ENCODE measurements at regions of chr19 and their contacts with region 1.

Region 1: DNA sequence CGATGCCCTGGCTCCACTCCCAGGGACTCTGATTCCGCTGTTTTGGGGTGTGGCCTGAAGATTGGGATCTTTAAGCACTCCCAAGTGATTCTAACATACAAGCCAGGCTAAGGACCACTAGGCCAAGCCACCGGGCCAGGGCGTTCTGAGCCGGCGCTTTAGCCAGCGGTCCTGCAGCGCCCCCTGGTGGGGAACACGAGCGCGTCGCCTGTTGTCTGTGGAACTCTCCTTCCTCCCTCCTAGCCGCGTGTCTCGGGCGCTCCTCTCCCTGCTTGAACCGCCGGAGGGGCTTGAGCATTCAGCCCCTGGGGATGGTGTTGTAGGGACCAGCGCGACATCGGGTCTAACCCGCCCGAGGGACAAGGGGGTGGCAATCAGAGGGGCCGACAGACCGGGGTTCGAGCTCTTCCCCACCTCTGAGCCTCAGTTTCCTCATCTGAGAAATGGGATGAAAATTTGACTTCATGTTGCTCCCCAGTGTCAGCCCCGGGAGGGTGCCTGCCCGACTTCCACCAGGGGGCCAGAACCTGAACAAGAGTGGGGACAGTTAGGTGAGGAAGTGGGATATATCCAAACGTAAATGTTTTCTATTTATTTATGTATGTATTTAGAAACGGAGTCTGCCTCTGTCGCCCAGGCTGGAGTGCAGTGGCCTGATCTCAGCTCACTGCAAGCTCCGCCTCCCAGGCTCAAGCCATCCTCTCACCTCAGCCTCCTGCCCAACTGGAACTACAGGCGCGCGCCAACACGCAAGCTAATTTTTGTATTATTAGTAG is 18.0 kb upstream of the PNMA8B start:
- DNase-seq: peak; percentile 77 to 80
- ATAC-seq: peak; percentile 85 to 95 (median 91)
- H3K4me3 ChIP-seq: no peak overlapping the region
- H3K27ac ChIP-seq: no peak overlapping the region
- H3K4me1 ChIP-seq: peaks cover 0 to 8% (median 0%) of the 10 kb centered on the region in 9 donors
- H3K27me3 ChIP-seq: peaks cover 0 to 16% (median 5%) of the 10 kb centered on the region in 7 donors
- CTCF ChIP-seq: peak; percentile 77 to 99 (median 94)

Region 2: DNA sequence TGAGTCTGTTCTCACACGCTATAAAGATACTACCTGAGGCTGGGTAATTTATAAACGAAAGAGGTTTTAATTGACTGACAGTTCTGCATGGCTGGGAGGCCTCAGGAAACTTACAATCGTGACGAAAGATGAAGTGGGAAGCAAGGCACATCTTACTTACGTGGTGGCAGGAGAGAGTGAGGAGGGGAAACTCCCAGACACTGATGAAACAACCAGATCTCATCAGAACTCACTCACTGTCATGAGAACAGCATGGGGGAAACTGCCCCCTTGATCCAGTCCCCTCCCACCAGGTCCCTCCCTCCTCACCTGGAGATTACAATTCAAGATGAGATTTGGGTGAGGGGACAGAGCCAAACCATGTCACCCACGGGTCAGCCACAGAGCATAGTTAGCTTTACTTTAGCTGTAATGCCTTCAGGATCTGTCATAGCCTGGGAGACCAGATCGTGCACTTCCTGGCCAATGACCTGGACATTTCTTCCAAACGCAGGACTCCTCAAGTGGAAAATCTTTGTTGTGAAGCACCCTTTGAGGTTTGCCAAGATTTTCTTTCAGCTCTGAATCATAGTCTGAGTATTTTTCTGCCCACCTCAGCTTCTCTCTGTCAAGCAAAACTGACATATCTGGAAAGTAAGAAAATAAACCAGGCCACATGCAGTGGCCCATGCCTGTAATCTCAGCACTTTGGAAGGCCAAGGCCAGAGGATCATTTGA is 242.0 kb before region 1 on chr19:
- intact Hi-C with region 1: loop called in 1 of 10 experiments (anchors 10 kb)
- DNase-seq: no peak
- ATAC-seq: no peak
- H3K4me3 ChIP-seq: no peak overlapping the region
- H3K27ac ChIP-seq: no peak overlapping the region
- H3K4me1 ChIP-seq: no peaks in the 10 kb centered on the region
- H3K27me3 ChIP-seq: peaks cover 0 to 54% (median 29%) of the 10 kb centered on the region in 7 donors
- CTCF ChIP-seq: no peak

Region 3: GRCh38 chr19:46288896-46289588 is 224.6 kb before region 1 on chr19:
- intact Hi-C with region 1: loop called in 4 of 10 experiments (anchors 5 to 10 kb)
- DNase-seq: peak; percentile 33 to 57
- ATAC-seq: peak; percentile 66 to 94 (median 85)
- H3K4me3 ChIP-seq: no peak overlapping the region
- H3K27ac ChIP-seq: peak overlapping the region; percentile 59 to 95 (median 69)
- H3K4me1 ChIP-seq: peaks cover 0 to 22% (median 11%) of the 10 kb centered on the region in 9 donors
- H3K27me3 ChIP-seq: no peaks in the 10 kb centered on the region
- CTCF ChIP-seq: no peak

Region 4: DNA sequence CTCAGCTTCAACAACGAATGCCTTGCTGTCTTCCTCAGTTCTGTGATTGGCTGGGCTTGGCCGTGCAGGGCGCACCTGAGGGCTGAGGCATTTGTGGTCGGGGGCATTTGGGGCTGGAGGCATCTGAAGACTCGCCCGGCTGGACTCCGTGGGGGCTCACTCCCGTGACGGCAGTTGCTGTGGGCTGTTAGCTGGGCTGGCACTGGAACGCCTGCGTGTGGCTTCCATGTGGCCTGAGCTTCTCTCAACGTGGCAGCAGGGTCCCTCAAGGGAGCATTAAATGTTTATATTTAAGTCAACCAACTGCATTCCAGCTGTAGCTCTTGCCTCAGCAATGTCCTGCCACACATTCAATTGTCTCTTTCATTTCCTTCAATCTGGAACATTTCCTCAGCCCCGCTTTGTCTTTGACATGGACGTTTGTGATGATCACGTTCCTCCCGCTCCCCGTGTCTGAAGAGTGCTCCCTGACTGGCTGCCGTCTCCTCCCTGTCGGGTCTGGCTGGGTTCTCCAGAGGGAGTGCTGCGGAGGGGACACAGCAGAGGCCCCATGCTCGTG is 121.3 kb before region 1 on chr19:
- intact Hi-C with region 1: loop called in 7 of 10 experiments (anchors 5 to 10 kb)
- DNase-seq: no peak
- ATAC-seq: no peak
- H3K4me3 ChIP-seq: no peak overlapping the region
- H3K27ac ChIP-seq: no peak overlapping the region
- H3K4me1 ChIP-seq: peaks cover 0 to 13% (median 0%) of the 10 kb centered on the region in 9 donors
- H3K27me3 ChIP-seq: peaks cover 0 to under 1% (median 0%) of the 10 kb centered on the region in 7 donors
- CTCF ChIP-seq: no peak

Region 5: GRCh38 chr19:46404055-46404752 is 109.4 kb before region 1 on chr19:
- intact Hi-C with region 1: loop called in 6 of 10 experiments (anchors 5 to 10 kb)
- DNase-seq: peak; percentile 29 to 48
- ATAC-seq: peak; percentile 22 to 63 (median 56)
- H3K4me3 ChIP-seq: peak overlapping the region; percentile 16 to 55 (median 42)
- H3K27ac ChIP-seq: peak overlapping the region in 9 of 10 donors; percentile 16 to 75 (median 58)
- H3K4me1 ChIP-seq: peaks cover 5 to 49% (median 24%) of the 10 kb centered on the region in 9 donors
- H3K27me3 ChIP-seq: peaks cover 0 to 77% (median 46%) of the 10 kb centered on the region in 7 donors
- CTCF ChIP-seq: peak in 4 of 9 donors; percentile 18 to 36 (median 27)

Region 6: DNA sequence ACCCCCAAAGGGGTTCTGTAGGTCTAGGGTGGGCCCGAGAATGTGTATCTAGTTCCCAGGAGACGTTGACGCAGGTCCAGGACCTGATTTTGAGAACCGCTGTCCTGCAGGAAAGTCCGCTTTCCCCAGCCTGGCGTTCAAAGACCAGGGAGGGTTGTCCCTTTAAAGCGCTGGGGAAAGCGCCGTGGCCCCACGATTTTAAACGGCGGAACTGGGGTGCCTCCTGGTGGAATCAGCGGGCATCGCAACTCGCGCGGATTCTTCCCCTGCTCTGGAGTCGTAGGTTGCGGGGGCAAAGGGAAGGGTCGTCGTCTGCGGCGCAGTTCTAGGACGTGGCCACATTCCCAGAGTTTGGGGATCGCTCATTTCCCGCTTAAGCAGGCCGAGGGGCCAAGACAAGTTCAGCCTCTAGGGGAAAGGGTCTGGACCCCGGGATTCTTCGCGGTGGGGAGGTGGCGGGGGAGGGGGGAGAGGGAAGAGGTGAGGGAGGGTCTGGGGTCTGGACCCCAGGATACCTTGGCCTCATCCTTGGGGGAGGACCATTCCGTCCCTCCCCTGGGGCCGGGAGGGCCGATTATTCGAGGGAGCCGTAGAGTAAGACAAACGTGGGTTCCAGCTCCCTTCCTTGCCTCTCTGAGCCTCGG is 25.7 kb before region 1 on chr19:
- intact Hi-C with region 1: loop called in 1 of 10 experiments (anchors 2 kb)
- DNase-seq: peak; percentile 71 to 82
- ATAC-seq: peak; percentile 72 to 86 (median 77)
- H3K4me3 ChIP-seq: peak overlapping the region in 9 of 10 donors; percentile 21 to 50 (median 46)
- H3K27ac ChIP-seq: no peak overlapping the region
- H3K4me1 ChIP-seq: peaks cover 9 to 38% (median 32%) of the 10 kb centered on the region in 9 donors
- H3K27me3 ChIP-seq: peaks cover 3 to 66% (median 58%) of the 10 kb centered on the region in 7 donors
- CTCF ChIP-seq: peak; percentile 80 to 95 (median 90)